ENCODE measurements at regions of chr3 and their contacts with region 1.

Region 1: GRCh38 chr3:149969940-149970715 is 567 bp downstream of the PFN2 start:
- DNase-seq: peak; percentile 76
- ATAC-seq: peak; percentile 76
- H3K4me3 Mint-ChIP-seq: peak overlapping the region; percentile 90
- H3K27ac Mint-ChIP-seq: peak overlapping the region; percentile 53
- H3K4me1 Mint-ChIP-seq: peaks cover 23% of the 10 kb centered on the region
- H3K27me3 Mint-ChIP-seq: peaks cover 15% of the 10 kb centered on the region
- CTCF ChIP-seq: no peak

Region 2: GRCh38 chr3:149917124-149917667 is 52.9 kb before region 1 on chr3:
- CTCF ChIA-PET with region 1: no interaction called
- POLR2A ChIA-PET with region 1: no interaction called
- intact Hi-C with region 1: no loop called
- DNase-seq: no peak
- ATAC-seq: no peak
- H3K4me3 Mint-ChIP-seq: no peak overlapping the region
- H3K27ac Mint-ChIP-seq: no peak overlapping the region
- H3K4me1 Mint-ChIP-seq: peaks cover 3% of the 10 kb centered on the region
- H3K27me3 Mint-ChIP-seq: no peaks in the 10 kb centered on the region
- CTCF ChIP-seq: no peak

Region 3: GRCh38 chr3:150005243-150006112 is 35.4 kb after region 1 on chr3:
- CTCF ChIA-PET with region 1: no interaction called
- POLR2A ChIA-PET with region 1: no interaction called
- intact Hi-C with region 1: no loop called
- DNase-seq: no peak
- ATAC-seq: no peak
- H3K4me3 Mint-ChIP-seq: no peak overlapping the region
- H3K27ac Mint-ChIP-seq: no peak overlapping the region
- H3K4me1 Mint-ChIP-seq: no peaks in the 10 kb centered on the region
- H3K27me3 Mint-ChIP-seq: peaks cover 3% of the 10 kb centered on the region
- CTCF ChIP-seq: no peak

Region 4: GRCh38 chr3:150183678-150184425 is 213.7 kb after region 1 on chr3:
- CTCF ChIA-PET with region 1: interaction called, 28 read pairs
- POLR2A ChIA-PET with region 1: no interaction called
- intact Hi-C with region 1: loop called (anchors 1 kb)
- DNase-seq: peak; percentile 23
- ATAC-seq: peak; percentile 49
- H3K4me3 Mint-ChIP-seq: no peak overlapping the region
- H3K27ac Mint-ChIP-seq: no peak overlapping the region
- H3K4me1 Mint-ChIP-seq: no peaks in the 10 kb centered on the region
- H3K27me3 Mint-ChIP-seq: peaks cover 13% of the 10 kb centered on the region
- CTCF ChIP-seq: no peak

Region 5: GRCh38 chr3:150286390-150287147 is 316.4 kb after region 1 on chr3:
- CTCF ChIA-PET with region 1: interaction called, 3 read pairs
- POLR2A ChIA-PET with region 1: no interaction called
- intact Hi-C with region 1: loop called (anchors 10 kb)
- DNase-seq: no peak
- ATAC-seq: peak; percentile 74
- H3K4me3 Mint-ChIP-seq: no peak overlapping the region
- H3K27ac Mint-ChIP-seq: no peak overlapping the region
- H3K4me1 Mint-ChIP-seq: no peaks in the 10 kb centered on the region
- H3K27me3 Mint-ChIP-seq: peaks cover 21% of the 10 kb centered on the region
- CTCF ChIP-seq: peak; percentile 54

Region 6: DNA sequence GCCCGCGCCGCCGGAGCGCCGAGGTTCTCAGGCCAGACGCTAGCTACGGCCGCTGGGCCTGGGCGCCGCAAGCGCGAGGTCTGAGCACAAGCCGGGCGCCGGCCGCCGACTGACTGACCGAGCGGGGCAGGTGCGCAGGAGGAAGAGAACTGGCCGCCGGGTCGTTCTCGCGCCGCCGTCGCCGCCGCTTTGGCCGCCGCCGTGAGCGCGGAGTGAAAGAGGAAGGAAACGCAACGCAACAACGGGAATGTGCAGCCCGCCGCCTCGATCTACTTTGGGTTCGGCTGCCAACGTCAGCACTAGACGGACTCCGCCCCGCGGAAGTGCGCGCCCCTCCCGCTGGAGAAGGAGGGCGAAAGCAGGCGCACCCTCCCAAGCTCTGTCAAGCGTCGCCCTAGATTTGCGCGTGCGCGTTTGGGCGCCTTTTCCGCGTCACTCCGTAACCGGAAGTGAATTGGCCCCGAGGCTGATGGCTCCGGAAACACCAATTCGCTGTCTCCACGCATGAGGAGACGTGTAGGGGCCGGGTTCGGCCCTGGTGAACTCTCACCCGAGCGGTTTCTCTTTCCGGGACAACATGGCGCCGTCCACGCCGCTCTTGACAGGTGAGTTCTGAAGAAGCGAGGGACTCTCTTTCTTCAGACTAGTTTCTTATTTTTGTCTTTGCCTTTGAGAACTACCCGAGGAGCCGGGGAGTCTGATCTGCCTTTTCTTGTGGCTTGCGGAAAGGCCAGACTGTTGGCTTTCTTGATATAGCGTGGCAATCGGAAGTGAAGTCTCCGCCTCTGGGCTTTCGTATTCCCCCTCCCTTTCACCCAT is 576.3 kb after region 1 on chr3 and contains the starts of genes EIF2A and SERP1:
- CTCF ChIA-PET with region 1: no interaction called
- POLR2A ChIA-PET with region 1: interaction called, 3 read pairs
- intact Hi-C with region 1: loop called (anchors 2 kb)
- DNase-seq: peak; percentile 98
- ATAC-seq: peak; percentile 92
- H3K4me3 Mint-ChIP-seq: peak within 1 kb of the TSS; percentile 96
- H3K27ac Mint-ChIP-seq: peak within 1 kb of the TSS; percentile 99
- H3K4me1 Mint-ChIP-seq: peaks cover 50% of the 10 kb centered on the region
- H3K27me3 Mint-ChIP-seq: no peaks in the 10 kb centered on the region
- CTCF ChIP-seq: no peak
- total RNA-seq, gene EIF2A: 105 and 109 TPM in 2 replicates
- total RNA-seq, gene SERP1: 87.2 and 88.2 TPM in 2 replicates

Region 7: GRCh38 chr3:151146071-151146730 is 1176.1 kb after region 1 on chr3:
- CTCF ChIA-PET with region 1: no interaction called
- POLR2A ChIA-PET with region 1: no interaction called
- intact Hi-C with region 1: loop called (anchors 10 kb)
- DNase-seq: peak; percentile 36
- ATAC-seq: peak; percentile 99
- H3K4me3 Mint-ChIP-seq: no peak overlapping the region
- H3K27ac Mint-ChIP-seq: no peak overlapping the region
- H3K4me1 Mint-ChIP-seq: peaks cover 4% of the 10 kb centered on the region
- H3K27me3 Mint-ChIP-seq: peaks cover 4% of the 10 kb centered on the region
- CTCF ChIP-seq: peak; percentile 87